ENCODE measurements at regions of chr4 and their contacts with region 1.

Region 1: GRCh38 chr4:83639849-83640493 is 104.1 kb downstream of the GPAT3 start:
- DNase-seq: peak; percentile 42
- ATAC-seq: peak; percentile 89
- H3K4me3 ChIP-seq: no peak overlapping the region
- H3K27ac ChIP-seq: no peak overlapping the region
- H3K4me1 ChIP-seq: no peaks in the 10 kb centered on the region
- H3K27me3 ChIP-seq: peaks cover 0 to 1% of the 10 kb centered on the region in 2 experiments; a peak in 1 of 4 replicates
- CTCF ChIP-seq: peak; percentile 67 to 90 (median 80)
- EP300 ChIP-seq: no peak
- POLR2A ChIP-seq: no peak
- RAD21 ChIP-seq: peak; percentile 89

Region 2: DNA sequence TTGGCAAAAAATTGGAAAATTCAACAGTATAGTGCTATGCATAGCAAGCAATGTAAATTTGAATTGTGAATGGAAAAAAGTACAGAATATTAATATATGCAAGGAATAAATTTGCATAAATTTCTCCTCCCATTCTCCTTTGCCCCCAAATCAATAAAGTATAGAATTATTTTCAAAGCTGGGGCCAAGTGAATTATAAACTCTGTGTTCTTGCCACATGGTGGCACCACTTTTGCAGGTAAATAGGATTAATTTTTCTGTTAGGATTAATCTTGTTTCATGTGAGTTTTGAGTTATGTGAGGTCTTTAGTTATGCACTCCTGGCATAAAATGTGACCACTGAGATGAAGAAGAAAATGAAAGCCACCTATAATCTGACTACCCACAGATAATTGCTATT is 585.0 kb before region 1 on chr4:
- CTCF ChIA-PET with region 1: no interaction called
- POLR2A ChIA-PET with region 1: no interaction called
- RAD21 ChIA-PET with region 1: no interaction called
- SMC1A ChIA-PET with region 1: no interaction called
- in situ Hi-C with region 1: loop called (anchors 25 kb)
- intact Hi-C with region 1: loop called (anchors 10 kb)
- DNase-seq: no peak
- ATAC-seq: peak; percentile 67
- H3K4me3 ChIP-seq: no peak overlapping the region
- H3K27ac ChIP-seq: no peak overlapping the region
- H3K4me1 ChIP-seq: no peaks in the 10 kb centered on the region
- H3K27me3 ChIP-seq: no peaks in the 10 kb centered on the region
- CTCF ChIP-seq: peak; percentile 19 to 48 (median 38); a peak in 3 of 6 replicates
- EP300 ChIP-seq: no peak
- POLR2A ChIP-seq: no peak
- RAD21 ChIP-seq: peak; percentile 51

Region 3: DNA sequence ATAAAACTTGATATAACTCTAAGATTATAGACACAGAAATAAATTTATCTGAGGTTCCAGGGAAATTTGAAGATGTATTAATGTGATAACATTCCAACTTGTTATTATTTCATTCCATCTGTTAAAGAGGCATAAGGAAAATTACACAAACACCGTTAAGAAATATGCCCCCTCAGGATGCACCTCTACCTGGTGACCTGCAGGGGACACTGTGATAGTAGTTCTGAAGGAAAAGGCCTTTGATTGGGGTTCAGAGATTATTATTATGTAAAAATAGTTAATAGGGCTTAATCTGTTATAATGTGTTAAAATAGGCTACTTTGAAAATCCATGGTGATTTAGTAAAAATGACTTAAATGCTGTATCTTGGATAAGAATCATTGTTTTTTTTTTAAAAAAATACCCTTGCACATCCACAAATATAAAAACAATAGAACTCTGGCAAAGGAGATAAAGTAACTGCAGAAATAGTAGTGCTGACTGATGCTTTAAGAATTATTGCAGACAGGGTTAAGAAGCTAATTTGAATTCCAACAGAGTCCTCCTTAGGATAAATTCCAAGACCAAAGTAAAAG is 149.0 kb before region 1 on chr4:
- CTCF ChIA-PET with region 1: interaction called, 26 read pairs
- POLR2A ChIA-PET with region 1: no interaction called
- RAD21 ChIA-PET with region 1: interaction called, 3 read pairs
- SMC1A ChIA-PET with region 1: interaction called, 12 read pairs
- in situ Hi-C with region 1: no loop called
- intact Hi-C with region 1: loop called (anchors 1 kb)
- DNase-seq: no peak
- ATAC-seq: peak; percentile 82
- H3K4me3 ChIP-seq: no peak overlapping the region
- H3K27ac ChIP-seq: no peak overlapping the region
- H3K4me1 ChIP-seq: no peaks in the 10 kb centered on the region
- H3K27me3 ChIP-seq: no peaks in the 10 kb centered on the region
- CTCF ChIP-seq: peak; percentile 78 to 94 (median 86)
- EP300 ChIP-seq: no peak
- POLR2A ChIP-seq: no peak
- RAD21 ChIP-seq: peak; percentile 76

Region 4: DNA sequence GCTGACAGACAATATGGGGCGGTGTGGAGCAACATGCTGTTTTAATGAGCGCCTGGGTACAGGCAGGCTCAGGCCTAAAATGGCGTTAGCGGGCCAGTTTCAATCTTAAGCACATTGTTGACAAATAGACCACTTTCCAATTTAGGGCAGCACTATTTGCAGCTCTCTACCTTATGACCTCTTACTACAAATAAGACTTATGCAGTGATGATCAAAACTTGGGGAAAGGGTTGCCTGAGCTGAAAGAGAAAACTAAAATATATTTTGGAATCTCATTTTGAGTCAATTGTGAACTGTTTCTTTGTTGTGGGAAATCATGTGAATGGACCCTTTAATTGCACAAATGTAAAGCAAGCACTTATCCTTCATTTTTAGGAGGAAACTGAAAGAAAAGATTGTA is 129.5 kb before region 1 on chr4:
- CTCF ChIA-PET with region 1: interaction called, 85 read pairs
- POLR2A ChIA-PET with region 1: no interaction called
- RAD21 ChIA-PET with region 1: interaction called, 12 read pairs
- SMC1A ChIA-PET with region 1: interaction called, 14 read pairs
- in situ Hi-C with region 1: loop called (anchors 5 kb)
- intact Hi-C with region 1: loop called (anchors 1 kb)
- DNase-seq: no peak
- ATAC-seq: peak; percentile 79
- H3K4me3 ChIP-seq: no peak overlapping the region
- H3K27ac ChIP-seq: no peak overlapping the region
- H3K4me1 ChIP-seq: no peaks in the 10 kb centered on the region
- H3K27me3 ChIP-seq: no peaks in the 10 kb centered on the region
- CTCF ChIP-seq: no peak
- EP300 ChIP-seq: peak in 1 of 2 experiments; percentile 32; a peak in 1 of 4 replicates
- POLR2A ChIP-seq: no peak
- RAD21 ChIP-seq: no peak

Region 5: DNA sequence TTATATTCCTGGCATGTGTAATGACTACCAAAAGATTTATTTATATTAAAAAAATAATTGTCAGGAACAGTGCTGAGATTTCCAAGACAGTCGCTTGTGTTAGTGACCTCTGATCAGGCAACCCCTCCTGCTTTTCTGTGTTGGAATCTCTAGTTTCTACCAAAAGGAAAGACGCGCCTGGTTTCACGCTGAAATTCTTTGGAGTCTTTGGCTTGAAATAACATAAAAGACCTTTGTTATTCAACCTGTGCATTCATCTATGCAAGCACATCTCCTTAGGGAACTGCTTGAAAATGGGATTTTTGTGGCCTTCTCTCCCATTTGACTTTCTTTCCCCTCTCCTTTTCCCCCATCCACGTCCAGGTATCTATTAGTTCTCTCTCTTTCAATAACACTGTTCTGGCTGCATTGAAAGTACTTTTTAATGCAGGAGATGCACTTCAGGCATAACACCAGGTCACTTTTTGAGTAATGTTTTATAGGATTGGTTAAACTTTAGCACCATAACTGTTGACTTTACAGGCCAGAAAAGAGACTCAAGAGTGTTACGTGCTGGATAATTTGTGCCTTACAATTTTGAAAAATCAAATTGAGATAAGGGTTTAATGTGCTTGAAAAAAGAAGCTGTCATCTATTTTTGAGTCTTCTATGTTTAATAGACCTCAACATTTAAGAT is 68.7 kb after region 1 on chr4:
- CTCF ChIA-PET with region 1: no interaction called
- POLR2A ChIA-PET with region 1: no interaction called
- RAD21 ChIA-PET with region 1: no interaction called
- SMC1A ChIA-PET with region 1: no interaction called
- in situ Hi-C with region 1: no loop called
- intact Hi-C with region 1: no loop called
- DNase-seq: no peak
- ATAC-seq: no peak
- H3K4me3 ChIP-seq: no peak overlapping the region
- H3K27ac ChIP-seq: no peak overlapping the region
- H3K4me1 ChIP-seq: no peaks in the 10 kb centered on the region
- H3K27me3 ChIP-seq: no peaks in the 10 kb centered on the region; a peak in 2 of 4 replicates
- CTCF ChIP-seq: no peak
- EP300 ChIP-seq: no peak
- POLR2A ChIP-seq: no peak
- RAD21 ChIP-seq: no peak

Region 6: DNA sequence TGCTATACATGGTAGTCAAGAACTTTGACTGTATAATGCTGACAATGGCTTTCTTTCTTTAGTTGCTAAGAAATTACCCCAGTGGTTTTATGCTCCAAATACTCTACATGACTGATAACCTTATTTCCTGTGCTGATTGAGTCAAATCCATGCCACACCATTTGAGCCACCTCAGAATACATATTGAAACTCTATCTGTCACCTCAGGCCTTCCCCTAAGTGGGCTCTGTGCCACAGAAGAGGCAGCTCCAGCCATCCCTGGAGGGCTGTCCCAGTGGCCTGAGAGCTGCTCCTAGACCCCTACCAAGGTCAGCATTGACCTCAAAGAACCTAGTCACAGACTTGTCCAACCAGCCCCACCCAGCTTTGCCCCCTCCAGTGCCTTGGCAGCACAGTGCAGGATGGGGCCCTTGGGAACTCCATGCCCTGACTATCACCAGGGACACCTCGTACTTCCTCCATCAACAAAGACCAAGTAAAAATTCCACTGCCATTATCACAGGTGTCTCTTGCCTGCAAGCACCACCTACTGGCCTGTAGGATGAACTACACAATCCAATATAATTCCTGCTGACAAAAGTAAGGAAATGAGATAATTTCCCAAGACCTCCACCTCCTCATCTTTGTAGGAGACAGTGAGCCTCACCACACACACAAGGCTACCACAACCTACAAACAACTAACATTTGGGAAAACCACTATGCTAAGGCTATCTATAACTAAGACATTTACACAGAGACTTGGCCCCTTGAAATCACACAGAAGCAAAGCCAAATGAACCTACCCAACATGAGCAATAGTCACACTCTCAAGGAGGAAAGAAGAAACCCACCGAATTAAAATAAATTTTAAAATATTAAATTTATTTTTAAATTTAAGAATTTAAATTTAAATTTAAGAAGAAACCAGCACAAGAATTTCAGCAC is 619.2 kb after region 1 on chr4:
- CTCF ChIA-PET with region 1: interaction called, 6 read pairs
- POLR2A ChIA-PET with region 1: no interaction called
- RAD21 ChIA-PET with region 1: no interaction called
- SMC1A ChIA-PET with region 1: interaction called, 5 read pairs
- in situ Hi-C with region 1: no loop called
- intact Hi-C with region 1: loop called (anchors 2 kb)
- DNase-seq: peak; percentile 37
- ATAC-seq: peak; percentile 95
- H3K4me3 ChIP-seq: no peak overlapping the region
- H3K27ac ChIP-seq: no peak overlapping the region
- H3K4me1 ChIP-seq: peaks cover 3% of the 10 kb centered on the region; the same call in 1 of the 2 replicates
- H3K27me3 ChIP-seq: no peaks in the 10 kb centered on the region
- CTCF ChIP-seq: peak; percentile 51 to 71 (median 62); a peak in 5 of 6 replicates
- EP300 ChIP-seq: no peak
- POLR2A ChIP-seq: no peak
- RAD21 ChIP-seq: peak; percentile 70

Region 7: GRCh38 chr4:84966383-84967242 is 1326.6 kb after region 1 on chr4 and contains the start of gene WDFY3:
- CTCF ChIA-PET with region 1: interaction called, 5 read pairs
- POLR2A ChIA-PET with region 1: no interaction called
- RAD21 ChIA-PET with region 1: no interaction called
- SMC1A ChIA-PET with region 1: interaction called, 3 read pairs
- in situ Hi-C with region 1: no loop called
- intact Hi-C with region 1: loop called (anchors 10 kb)
- DNase-seq: no peak
- ATAC-seq: no peak; the same call in 2 of the 3 replicates
- H3K4me3 ChIP-seq: no peak within 1 kb of the TSS
- H3K27ac ChIP-seq: no peak within 1 kb of the TSS
- H3K4me1 ChIP-seq: no peaks in the 10 kb centered on the region
- H3K27me3 ChIP-seq: peaks cover 0 to 10% of the 10 kb centered on the region in 2 experiments; a peak in 3 of 4 replicates
- CTCF ChIP-seq: no peak
- EP300 ChIP-seq: no peak
- POLR2A ChIP-seq: no peak; the same call in 1 of the 2 replicates
- RAD21 ChIP-seq: no peak
- polyA plus RNA-seq, gene WDFY3: 0.06 TPM in 1 of 2 experiments, not detected in the other

Measured in GM12878 (cell line).